ENCODE measurements at regions of chr4 and their contacts with region 1.

Region 1: GRCh38 chr4:99949034-99949998 is 759 bp downstream of the H2AZ1 start:
- DNase-seq: peak; percentile 63 to 90 (median 86)
- ATAC-seq: peak; percentile 49
- H3K4me3 ChIP-seq: peak overlapping the region; percentile 93
- H3K4me3 Mint-ChIP-seq: no peak overlapping the region
- H3K27ac ChIP-seq: peak overlapping the region; percentile 91
- H3K27ac Mint-ChIP-seq: no peak overlapping the region
- H3K4me1 ChIP-seq: peaks cover 34 to 37% of the 10 kb centered on the region in 2 donors
- H3K4me1 Mint-ChIP-seq: peaks cover 18 to 40% (median 31%) of the 10 kb centered on the region in 7 donors
- H3K27me3 ChIP-seq: no peaks in the 10 kb centered on the region
- H3K27me3 Mint-ChIP-seq: no peaks in the 10 kb centered on the region

Region 2: DNA sequence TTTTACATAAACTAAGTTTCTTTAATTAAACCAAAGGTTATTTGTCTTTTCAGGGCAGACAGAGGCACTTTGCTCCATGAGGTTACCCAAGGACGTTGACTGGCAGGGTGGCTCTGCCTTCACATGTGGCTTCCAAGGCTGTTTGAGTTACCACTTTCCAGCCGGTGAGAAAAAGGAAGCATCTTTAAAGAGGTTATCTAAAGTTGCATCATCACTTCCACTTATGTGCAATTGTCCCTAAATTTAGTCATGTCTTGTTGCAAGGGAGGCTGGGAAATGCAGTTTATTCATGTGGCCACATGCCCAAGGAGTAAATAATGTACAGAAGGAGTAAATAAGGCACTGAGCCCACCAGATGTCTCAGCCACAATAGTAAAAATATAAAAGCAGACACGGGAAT is 1717.1 kb before region 1 on chr4:
- CTCF ChIA-PET with region 1: no interaction called
- POLR2A ChIA-PET with region 1: no interaction called
- intact Hi-C with region 1: no loop called
- DNase-seq: no peak
- ATAC-seq: peak; percentile 48
- H3K4me3 ChIP-seq: no peak overlapping the region
- H3K4me3 Mint-ChIP-seq: no peak overlapping the region
- H3K27ac ChIP-seq: no peak overlapping the region
- H3K27ac Mint-ChIP-seq: no peak overlapping the region
- H3K4me1 ChIP-seq: no peaks in the 10 kb centered on the region
- H3K4me1 Mint-ChIP-seq: peaks cover 0 to 2% (median 0%) of the 10 kb centered on the region in 7 donors
- H3K27me3 ChIP-seq: no peaks in the 10 kb centered on the region
- H3K27me3 Mint-ChIP-seq: peaks cover 0 to 4% (median 0%) of the 10 kb centered on the region in 5 donors

Region 3: DNA sequence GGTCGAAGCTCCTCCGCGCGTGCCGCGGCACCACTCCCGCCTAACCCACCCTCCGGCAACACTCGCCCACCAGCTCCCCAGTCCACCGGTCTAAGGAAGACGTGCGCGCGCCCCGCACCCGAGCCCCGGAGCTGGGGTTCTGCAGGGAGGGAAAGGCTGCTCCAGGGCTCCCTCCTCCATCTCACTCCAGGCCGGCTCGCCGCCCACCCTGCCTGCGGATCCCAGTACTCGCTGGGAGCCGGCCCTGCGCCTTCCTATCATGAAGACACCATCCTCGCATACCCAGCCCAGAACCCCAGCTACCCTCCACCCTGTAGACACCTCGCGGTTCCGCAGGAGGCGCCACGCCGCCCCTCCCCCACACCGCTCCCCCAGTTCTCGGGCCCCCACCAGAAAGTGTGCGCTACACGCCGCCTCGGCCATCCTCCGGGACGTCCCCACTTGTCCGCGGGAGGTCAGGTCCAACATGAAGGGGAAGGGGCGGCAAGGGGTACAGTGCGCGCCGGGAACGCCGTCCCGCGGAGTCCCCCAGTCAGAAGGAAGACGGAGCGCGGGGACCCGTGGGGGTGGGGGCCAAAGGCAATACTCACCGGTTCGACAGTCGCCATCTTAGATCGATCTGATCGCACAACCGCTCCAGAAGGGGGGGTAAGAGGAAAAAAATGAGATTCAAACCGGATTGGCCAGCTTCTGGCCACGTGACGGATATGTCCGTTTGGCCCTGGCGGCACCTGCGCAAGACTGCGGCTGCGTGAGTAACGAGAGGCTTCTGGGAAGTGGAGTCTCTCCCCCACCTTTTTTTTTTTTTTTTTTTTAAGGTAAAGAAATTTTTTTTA is 1020.6 kb before region 1 on chr4 and contains the start of gene EIF4E:
- CTCF ChIA-PET with region 1: no interaction called
- POLR2A ChIA-PET with region 1: interaction called, 3 read pairs
- intact Hi-C with region 1: loop called (anchors 1 to 2 kb)
- DNase-seq: peak; percentile 81 to 99 (median 97)
- ATAC-seq: peak; percentile 88
- H3K4me3 ChIP-seq: peak within 1 kb of the TSS; percentile 96
- H3K4me3 Mint-ChIP-seq: peak within 1 kb of the TSS; percentile 91 to 100 (median 96)
- H3K27ac ChIP-seq: peak within 1 kb of the TSS; percentile 88
- H3K27ac Mint-ChIP-seq: peak within 1 kb of the TSS; percentile 88 to 98 (median 97)
- H3K4me1 ChIP-seq: peaks cover 9 to 15% of the 10 kb centered on the region in 2 donors
- H3K4me1 Mint-ChIP-seq: peaks cover 12 to 52% (median 38%) of the 10 kb centered on the region in 7 donors
- H3K27me3 ChIP-seq: no peaks in the 10 kb centered on the region
- H3K27me3 Mint-ChIP-seq: peaks cover 0 to 4% (median 0%) of the 10 kb centered on the region in 5 donors
- total RNA-seq, gene EIF4E: 53.6 to 96.1 (median 63.0) TPM

Region 4: DNA sequence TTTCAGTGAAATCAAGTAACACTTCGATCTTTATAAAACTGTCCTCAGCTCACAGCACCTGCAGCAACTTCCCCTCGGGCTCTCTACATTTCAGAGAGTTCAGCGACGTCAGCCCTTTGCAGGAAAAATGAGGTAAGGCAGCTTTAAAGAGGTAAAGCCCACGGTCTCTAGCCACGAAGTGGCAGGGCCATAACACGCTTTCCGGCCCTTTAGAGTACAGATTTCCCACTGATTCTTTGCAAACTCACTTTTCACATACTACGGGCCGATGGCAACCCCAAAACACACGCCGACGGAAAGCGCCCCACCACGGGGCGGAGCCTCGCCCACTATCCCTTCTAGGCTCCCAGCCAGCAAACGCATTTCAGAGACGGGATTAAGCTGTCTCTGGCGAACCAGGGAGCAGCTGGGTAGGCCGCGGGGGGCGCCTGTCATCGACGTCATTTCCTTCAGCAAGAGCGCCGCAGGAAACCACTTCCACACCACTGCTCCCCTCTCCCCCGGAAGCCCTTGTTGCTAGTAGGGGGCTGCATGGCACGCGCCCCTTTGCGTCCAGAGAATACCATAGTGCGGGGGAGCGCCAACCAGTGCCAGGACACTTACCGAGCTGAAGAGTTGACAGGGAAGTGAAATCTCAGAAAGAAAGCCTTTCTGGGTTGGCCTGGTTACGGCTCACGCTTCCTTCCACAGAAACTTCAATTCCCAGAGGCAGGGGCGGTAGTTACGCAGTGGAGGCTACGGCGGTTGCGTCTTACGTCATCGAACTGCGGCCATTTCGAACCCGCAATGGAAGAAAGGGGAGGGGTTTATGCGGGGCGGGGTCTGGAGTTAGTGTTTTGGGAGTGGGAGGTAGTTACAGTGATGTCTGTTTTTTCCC is 385.8 kb before region 1 on chr4 and contains the start of gene TRMT10A:
- CTCF ChIA-PET with region 1: interaction called, 6 read pairs
- POLR2A ChIA-PET with region 1: interaction called, 35 read pairs
- intact Hi-C with region 1: loop called (anchors 1 kb)
- DNase-seq: peak; percentile 79 to 98 (median 98)
- ATAC-seq: peak; percentile 91
- H3K4me3 ChIP-seq: peak within 1 kb of the TSS; percentile 92
- H3K4me3 Mint-ChIP-seq: peak within 1 kb of the TSS; percentile 77 to 99 (median 98)
- H3K27ac ChIP-seq: peak within 1 kb of the TSS; percentile 91
- H3K27ac Mint-ChIP-seq: peak within 1 kb of the TSS; percentile 98 to 100 (median 100)
- H3K4me1 ChIP-seq: no peaks in the 10 kb centered on the region
- H3K4me1 Mint-ChIP-seq: peaks cover 0 to 33% (median 28%) of the 10 kb centered on the region in 7 donors
- H3K27me3 ChIP-seq: no peaks in the 10 kb centered on the region
- H3K27me3 Mint-ChIP-seq: peaks cover 13 to 29% (median 23%) of the 10 kb centered on the region in 5 donors
- total RNA-seq, gene TRMT10A: 3.9 to 9.1 (median 7.7) TPM

Region 5: GRCh38 chr4:99885063-99885664 is 64.2 kb before region 1 on chr4:
- CTCF ChIA-PET with region 1: interaction called, 4 read pairs
- POLR2A ChIA-PET with region 1: interaction called, 7 read pairs
- intact Hi-C with region 1: loop called (anchors 1 to 2 kb)
- DNase-seq: peak in 7 of 9 donors; percentile 34 to 64 (median 54)
- ATAC-seq: peak; percentile 72
- H3K4me3 ChIP-seq: no peak overlapping the region
- H3K4me3 Mint-ChIP-seq: no peak overlapping the region
- H3K27ac ChIP-seq: no peak overlapping the region
- H3K27ac Mint-ChIP-seq: no peak overlapping the region
- H3K4me1 ChIP-seq: peaks cover 0 to 2% of the 10 kb centered on the region in 2 donors
- H3K4me1 Mint-ChIP-seq: peaks cover 0 to 19% (median 13%) of the 10 kb centered on the region in 7 donors
- H3K27me3 ChIP-seq: no peaks in the 10 kb centered on the region
- H3K27me3 Mint-ChIP-seq: no peaks in the 10 kb centered on the region

Region 6: DNA sequence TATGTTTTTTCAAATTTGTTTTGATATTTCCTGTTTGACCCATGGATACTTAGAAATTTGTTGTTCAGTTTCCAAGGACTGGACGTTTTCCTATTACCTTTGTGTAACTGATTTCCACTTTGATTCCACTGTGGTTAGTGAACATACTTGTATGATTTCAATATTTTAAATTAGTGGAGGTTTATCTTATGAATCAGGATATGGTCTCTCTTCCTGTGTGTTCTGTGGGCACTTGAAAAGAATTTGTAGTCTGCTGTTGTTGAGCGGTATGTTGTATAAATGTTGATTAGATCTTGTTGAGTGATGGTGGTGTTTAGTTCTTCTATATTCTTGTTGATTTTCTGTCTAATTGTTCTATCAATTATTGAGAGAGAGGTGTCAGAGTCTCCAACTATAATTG is 33.9 kb before region 1 on chr4:
- CTCF ChIA-PET with region 1: no interaction called
- POLR2A ChIA-PET with region 1: no interaction called
- intact Hi-C with region 1: no loop called
- DNase-seq: no peak
- ATAC-seq: no peak
- H3K4me3 ChIP-seq: no peak overlapping the region
- H3K4me3 Mint-ChIP-seq: no peak overlapping the region
- H3K27ac ChIP-seq: no peak overlapping the region
- H3K27ac Mint-ChIP-seq: peak overlapping the region in 5 of 9 donors; percentile 6 to 67 (median 12)
- H3K4me1 ChIP-seq: no peaks in the 10 kb centered on the region
- H3K4me1 Mint-ChIP-seq: peaks cover 11 to 27% (median 17%) of the 10 kb centered on the region in 7 donors
- H3K27me3 ChIP-seq: no peaks in the 10 kb centered on the region
- H3K27me3 Mint-ChIP-seq: no peaks in the 10 kb centered on the region

Region 7: DNA sequence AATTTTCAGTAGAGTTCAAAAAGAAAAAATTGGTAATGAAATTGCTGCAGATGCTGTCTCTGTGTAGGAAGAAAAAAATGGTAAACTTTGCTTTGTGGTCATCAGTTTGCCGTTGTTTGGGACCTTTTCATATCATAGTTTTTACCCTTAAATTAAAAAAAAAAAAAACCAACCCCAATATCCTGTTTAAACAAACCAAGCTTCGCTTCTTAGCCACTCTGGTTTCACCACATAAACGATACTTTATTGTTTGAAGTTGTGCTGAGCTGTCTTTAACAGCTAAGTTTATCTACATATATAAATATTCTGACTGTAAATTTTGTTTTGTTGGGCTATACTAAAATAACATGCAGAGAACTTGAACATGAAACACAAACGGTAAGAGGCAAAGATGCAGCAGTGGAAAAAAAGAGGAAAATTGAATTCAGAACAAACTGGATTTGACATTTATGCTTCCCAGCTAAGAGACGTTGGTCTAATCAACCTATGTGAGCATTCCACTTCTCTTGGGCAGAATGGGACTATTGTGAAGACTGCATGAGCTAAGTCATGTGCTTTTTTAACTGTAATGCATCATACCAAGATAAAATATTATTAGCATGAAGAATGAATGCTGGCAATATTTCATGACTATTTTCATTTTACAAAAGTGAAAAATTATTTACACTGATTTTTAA is 16.5 kb after region 1 on chr4:
- CTCF ChIA-PET with region 1: no interaction called
- POLR2A ChIA-PET with region 1: interaction called, 5 read pairs
- intact Hi-C with region 1: loop called in 1 of 2 experiments (anchors 1 kb)
- DNase-seq: peak in 6 of 9 donors; percentile 24 to 57 (median 42)
- ATAC-seq: peak; percentile 75
- H3K4me3 ChIP-seq: no peak overlapping the region
- H3K4me3 Mint-ChIP-seq: peak overlapping the region in 9 of 10 donors; percentile 11 to 68 (median 42)
- H3K27ac ChIP-seq: no peak overlapping the region
- H3K27ac Mint-ChIP-seq: peak overlapping the region in 3 of 9 donors; percentile 34 to 57 (median 41)
- H3K4me1 ChIP-seq: peaks cover 0 to 5% of the 10 kb centered on the region in 2 donors
- H3K4me1 Mint-ChIP-seq: peaks cover 10 to 29% (median 22%) of the 10 kb centered on the region in 7 donors
- H3K27me3 ChIP-seq: no peaks in the 10 kb centered on the region
- H3K27me3 Mint-ChIP-seq: peaks cover 0 to 20% (median 4%) of the 10 kb centered on the region in 5 donors

Region 8: DNA sequence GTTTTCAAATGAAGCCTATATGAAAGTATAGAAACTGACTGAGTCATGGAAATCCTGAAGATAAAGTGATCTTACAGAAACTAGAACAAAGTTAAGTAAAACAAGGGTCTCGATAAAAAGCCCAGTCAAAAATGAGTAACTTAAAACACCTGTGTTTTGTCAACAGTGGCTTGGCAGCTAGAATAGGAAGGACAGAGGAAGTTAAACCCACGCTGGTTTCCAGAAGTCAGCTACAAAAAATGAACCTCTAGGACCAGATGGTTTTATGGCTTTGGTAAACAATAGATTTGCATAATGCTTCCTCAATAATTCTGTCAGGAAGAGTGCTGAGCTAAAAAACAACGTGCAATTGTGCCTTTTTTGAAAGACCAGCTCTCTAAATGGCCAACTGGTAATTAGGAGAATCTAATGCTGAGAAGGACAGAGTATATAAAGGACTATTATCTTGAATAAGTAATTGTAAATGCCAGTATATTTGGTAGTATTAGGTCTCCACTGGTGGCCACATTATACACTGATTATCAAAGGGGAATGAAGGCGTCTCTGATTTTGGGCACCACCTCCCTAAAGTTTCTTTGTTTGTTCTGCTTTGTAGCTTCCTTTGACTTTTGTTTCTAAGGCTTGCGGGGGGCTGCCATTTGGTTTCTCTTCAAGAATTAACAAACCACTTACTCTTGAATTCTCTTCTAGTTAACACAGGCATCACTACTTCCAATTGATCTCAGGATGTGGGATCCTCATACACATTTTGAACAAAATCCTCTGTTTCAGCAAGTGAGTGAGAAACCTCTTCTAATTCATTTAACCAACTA is 1470.2 kb after region 1 on chr4:
- CTCF ChIA-PET with region 1: no interaction called
- POLR2A ChIA-PET with region 1: no interaction called
- intact Hi-C with region 1: loop called in 1 of 2 experiments (anchors 5 kb)
- DNase-seq: peak in 5 of 9 donors; percentile 7 to 26 (median 24)
- ATAC-seq: no peak
- H3K4me3 ChIP-seq: no peak overlapping the region
- H3K4me3 Mint-ChIP-seq: peak overlapping the region in 6 of 10 donors; percentile 1 to 70 (median 12)
- H3K27ac ChIP-seq: no peak overlapping the region
- H3K27ac Mint-ChIP-seq: peak overlapping the region in 2 of 9 donors; percentile 41 to 65
- H3K4me1 ChIP-seq: peaks cover 33 to 36% of the 10 kb centered on the region in 2 donors
- H3K4me1 Mint-ChIP-seq: peaks cover 26 to 53% (median 39%) of the 10 kb centered on the region in 7 donors
- H3K27me3 ChIP-seq: peaks cover 0 to 11% of the 10 kb centered on the region in 2 donors
- H3K27me3 Mint-ChIP-seq: peaks cover 32 to 62% (median 41%) of the 10 kb centered on the region in 5 donors

Measured in naive thymus-derived CD4-positive, alpha-beta T cell (primary cell).